Activated CD4-positive, alpha-beta memory T cell treated with anti-CD3 and anti-CD28 coated beads for 36 hours (primary cell): ENCODE measurements at regions of chr5 and their contacts with region 1.

Region 1: GRCh38 chr5:36151434-36152323 is at the starts of genes LMBRD2 and SKP2:
- DNase-seq: peak; percentile 98
- H3K4me3 Mint-ChIP-seq: peak within 1 kb of the TSS; percentile 95
- H3K27ac Mint-ChIP-seq: peak within 1 kb of the TSS; percentile 84
- H3K4me1 Mint-ChIP-seq: peaks cover 62% of the 10 kb centered on the region
- H3K27me3 Mint-ChIP-seq: no peaks in the 10 kb centered on the region
- total RNA-seq, gene LMBRD2: 8.1 to 10.0 TPM
- total RNA-seq, gene SKP2: 33.1 to 34.7 TPM

Region 2: GRCh38 chr5:34929150-34929719 is 1222.4 kb before region 1 on chr5 and contains the start of gene DNAJC21:
- CTCF ChIA-PET with region 1: no interaction called
- POLR2A ChIA-PET with region 1: interaction called, 5 read pairs
- intact Hi-C with region 1: loop called (anchors 2 kb)
- DNase-seq: peak; percentile 99
- H3K4me3 Mint-ChIP-seq: peak within 1 kb of the TSS; percentile 97
- H3K27ac Mint-ChIP-seq: peak within 1 kb of the TSS; percentile 93
- H3K4me1 Mint-ChIP-seq: peaks cover 35% of the 10 kb centered on the region
- H3K27me3 Mint-ChIP-seq: no peaks in the 10 kb centered on the region
- total RNA-seq, gene DNAJC21: 60.3 to 62.3 TPM

Region 3: GRCh38 chr5:35745667-35746066 is 406.0 kb before region 1 on chr5:
- CTCF ChIA-PET with region 1: no interaction called
- POLR2A ChIA-PET with region 1: no interaction called
- intact Hi-C with region 1: no loop called
- DNase-seq: no peak
- H3K4me3 Mint-ChIP-seq: no peak overlapping the region
- H3K27ac Mint-ChIP-seq: no peak overlapping the region
- H3K4me1 Mint-ChIP-seq: peaks cover 37% of the 10 kb centered on the region
- H3K27me3 Mint-ChIP-seq: no peaks in the 10 kb centered on the region

Region 4: GRCh38 chr5:36202521-36202961 is 50.9 kb after region 1 on chr5:
- CTCF ChIA-PET with region 1: no interaction called
- POLR2A ChIA-PET with region 1: no interaction called
- intact Hi-C with region 1: no loop called
- DNase-seq: no peak
- H3K4me3 Mint-ChIP-seq: no peak overlapping the region
- H3K27ac Mint-ChIP-seq: no peak overlapping the region
- H3K4me1 Mint-ChIP-seq: no peaks in the 10 kb centered on the region
- H3K27me3 Mint-ChIP-seq: no peaks in the 10 kb centered on the region

Region 5: GRCh38 chr5:36530215-36530614 is 378.5 kb after region 1 on chr5:
- CTCF ChIA-PET with region 1: no interaction called
- POLR2A ChIA-PET with region 1: no interaction called
- intact Hi-C with region 1: no loop called
- DNase-seq: no peak
- H3K4me3 Mint-ChIP-seq: no peak overlapping the region
- H3K27ac Mint-ChIP-seq: no peak overlapping the region
- H3K4me1 Mint-ChIP-seq: no peaks in the 10 kb centered on the region
- H3K27me3 Mint-ChIP-seq: peaks cover 15% of the 10 kb centered on the region

Region 6: GRCh38 chr5:36606428-36607113 is 454.9 kb after region 1 on chr5 and contains the start of gene SLC1A3:
- CTCF ChIA-PET with region 1: no interaction called
- POLR2A ChIA-PET with region 1: no interaction called
- intact Hi-C with region 1: loop called (anchors 5 kb)
- DNase-seq: peak; percentile 76
- H3K4me3 Mint-ChIP-seq: peak within 1 kb of the TSS; percentile 72
- H3K27ac Mint-ChIP-seq: peak within 1 kb of the TSS; percentile 54
- H3K4me1 Mint-ChIP-seq: peaks cover 18% of the 10 kb centered on the region
- H3K27me3 Mint-ChIP-seq: peaks cover 54% of the 10 kb centered on the region
- total RNA-seq, gene SLC1A3: 0.29 TPM in 1 of 2 experiments, not detected in the other

Region 7: GRCh38 chr5:37370864-37371726 is 1219.4 kb after region 1 on chr5 and contains the start of gene NUP155:
- CTCF ChIA-PET with region 1: no interaction called
- POLR2A ChIA-PET with region 1: no interaction called
- intact Hi-C with region 1: loop called (anchors 2 kb)
- DNase-seq: peak; percentile 94
- H3K4me3 Mint-ChIP-seq: peak within 1 kb of the TSS; percentile 94
- H3K27ac Mint-ChIP-seq: peak within 1 kb of the TSS; percentile 90
- H3K4me1 Mint-ChIP-seq: peaks cover 24% of the 10 kb centered on the region
- H3K27me3 Mint-ChIP-seq: no peaks in the 10 kb centered on the region
- total RNA-seq, gene NUP155: 74.6 to 75.6 TPM